ENCODE measurements at regions of chr7 and their contacts with region 1.

Region 1: GRCh38 chr7:85890244-85890811 is 703.5 kb upstream of the SEMA3D start:
- DNase-seq: peak; percentile 10 to 34
- ATAC-seq: peak in 1 of 2 experiments; percentile 75; a peak in 2 of 6 replicates
- H3K4me3 ChIP-seq: no peak overlapping the region
- H3K27ac ChIP-seq: no peak overlapping the region
- H3K4me1 ChIP-seq: no peaks in the 10 kb centered on the region
- CTCF ChIP-seq: peak; percentile 69
- EP300 ChIP-seq: no peak
- POLR2A ChIP-seq: no peak
- RAD21 ChIP-seq: peak; percentile 73 to 77

Region 2: GRCh38 chr7:85705076-85705475 is 185.3 kb before region 1 on chr7:
- CTCF ChIA-PET with region 1: no interaction called
- POLR2A ChIA-PET with region 1: no interaction called
- DNase-seq: no peak
- ATAC-seq: no peak
- H3K4me3 ChIP-seq: no peak overlapping the region
- H3K27ac ChIP-seq: no peak overlapping the region
- H3K4me1 ChIP-seq: no peaks in the 10 kb centered on the region
- CTCF ChIP-seq: no peak
- EP300 ChIP-seq: no peak
- POLR2A ChIP-seq: no peak
- RAD21 ChIP-seq: no peak

Region 3: DNA sequence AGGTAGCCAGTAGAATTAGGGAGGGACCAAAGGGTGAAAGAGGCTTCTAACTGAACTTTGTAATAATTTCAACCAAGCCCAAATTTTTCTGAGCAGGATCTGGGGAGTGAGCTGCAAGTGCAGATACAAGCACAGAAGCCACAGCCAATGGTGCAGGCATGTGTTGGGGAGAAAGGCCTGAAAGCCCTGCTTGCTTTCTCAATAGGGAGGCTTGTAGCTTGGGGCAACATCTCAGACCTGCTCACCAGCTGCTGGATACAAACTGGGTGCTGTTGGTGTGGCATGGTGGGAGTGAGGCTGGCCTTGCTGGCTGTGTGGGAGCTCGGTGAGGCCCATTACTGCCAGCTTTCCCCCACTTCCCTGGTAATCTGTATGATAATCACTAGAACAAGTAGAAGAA is 14.9 kb before region 1 on chr7:
- CTCF ChIA-PET with region 1: no interaction called
- POLR2A ChIA-PET with region 1: no interaction called
- DNase-seq: no peak
- ATAC-seq: no peak
- H3K4me3 ChIP-seq: no peak overlapping the region
- H3K27ac ChIP-seq: no peak overlapping the region
- H3K4me1 ChIP-seq: no peaks in the 10 kb centered on the region
- CTCF ChIP-seq: no peak
- EP300 ChIP-seq: no peak
- POLR2A ChIP-seq: no peak
- RAD21 ChIP-seq: no peak

Region 4: GRCh38 chr7:86469680-86470295 is 579.5 kb after region 1 on chr7:
- CTCF ChIA-PET with region 1: interaction called, 20 read pairs
- POLR2A ChIA-PET with region 1: no interaction called
- DNase-seq: peak; percentile 15 to 78
- ATAC-seq: peak; percentile 90 to 91
- H3K4me3 ChIP-seq: no peak overlapping the region
- H3K27ac ChIP-seq: no peak overlapping the region
- H3K4me1 ChIP-seq: no peaks in the 10 kb centered on the region
- CTCF ChIP-seq: peak; percentile 74
- EP300 ChIP-seq: no peak
- POLR2A ChIP-seq: no peak
- RAD21 ChIP-seq: peak; percentile 72 to 83

Region 5: DNA sequence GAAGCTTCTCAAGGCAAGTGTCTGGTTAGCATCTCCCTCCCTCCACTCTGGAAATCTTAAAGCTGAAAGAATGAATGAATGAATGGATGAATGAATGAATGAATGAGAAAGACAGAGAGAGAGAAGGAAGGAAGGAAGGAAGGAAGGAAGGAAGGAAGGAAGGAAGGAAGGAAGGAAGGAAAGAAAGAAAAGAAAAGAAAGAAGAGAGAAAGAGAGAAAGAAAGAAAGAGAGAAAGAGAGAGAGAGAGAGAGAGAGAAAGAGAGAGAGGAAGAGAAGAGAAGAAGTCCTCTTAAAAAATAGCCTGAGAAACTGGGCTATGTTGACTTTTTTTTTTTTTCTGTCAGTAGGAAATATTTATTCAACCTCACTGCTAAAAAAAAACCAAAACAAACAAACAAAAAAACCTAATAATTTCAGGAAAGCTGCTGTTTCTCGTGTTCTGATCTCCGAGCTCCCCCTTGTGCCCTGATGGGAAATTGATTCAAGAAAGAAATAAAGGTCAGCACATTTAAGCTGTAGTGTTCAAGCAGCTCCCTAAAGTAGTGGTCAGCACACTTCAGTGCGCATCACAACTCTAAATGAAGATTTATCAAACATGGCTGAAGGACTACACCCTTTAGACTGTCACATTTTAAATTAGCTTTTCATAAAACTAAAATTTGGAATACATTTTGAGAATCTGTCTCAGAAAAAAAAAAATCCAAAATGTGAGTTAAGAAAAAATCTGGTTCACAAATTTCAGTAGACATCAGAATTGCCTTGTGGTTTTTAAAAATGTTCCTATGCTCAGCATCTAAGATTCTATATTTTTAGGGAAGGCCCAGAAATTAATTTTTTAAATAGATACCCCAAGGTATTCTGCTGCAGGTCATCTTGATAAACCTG is 1014.9 kb after region 1 on chr7:
- CTCF ChIA-PET with region 1: interaction called, 19 read pairs
- POLR2A ChIA-PET with region 1: no interaction called
- DNase-seq: peak; percentile 1 to 42
- ATAC-seq: peak; percentile 73 to 77; a peak in 4 of 6 replicates
- H3K4me3 ChIP-seq: no peak overlapping the region
- H3K27ac ChIP-seq: no peak overlapping the region
- H3K4me1 ChIP-seq: no peaks in the 10 kb centered on the region
- CTCF ChIP-seq: peak; percentile 75
- EP300 ChIP-seq: no peak
- POLR2A ChIP-seq: no peak
- RAD21 ChIP-seq: peak; percentile 77 to 83